Breast epithelium (tissue), 4 donors: ENCODE measurements at regions of chr18 and their contacts with region 1.

Region 1: DNA sequence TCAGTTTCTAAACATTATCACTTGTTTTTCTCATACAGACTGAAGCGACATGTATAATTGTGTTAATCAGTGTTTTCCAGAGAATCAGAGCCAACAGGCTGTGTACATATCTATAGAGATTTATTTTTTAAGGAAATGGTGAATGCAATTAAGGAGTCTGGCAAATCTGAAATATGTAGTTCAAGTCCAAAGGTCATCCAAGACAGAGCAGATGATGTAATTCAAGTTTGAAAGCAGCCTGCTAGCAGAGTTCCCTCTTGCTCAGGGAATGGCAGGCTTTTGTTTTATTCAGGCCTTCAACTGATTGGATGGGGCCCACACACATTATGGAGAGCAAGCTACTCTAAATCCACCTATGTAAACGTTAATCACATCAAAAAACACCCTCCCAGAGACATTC is 282.6 kb downstream of the CBLN2 start:
- DNase-seq: no peak
- H3K4me3 ChIP-seq: no peak overlapping the region
- H3K27ac ChIP-seq: no peak overlapping the region
- H3K4me1 ChIP-seq: no peaks in the 10 kb centered on the region
- H3K27me3 ChIP-seq: no peaks in the 10 kb centered on the region
- CTCF ChIP-seq: no peak
- POLR2A ChIP-seq: no peak

Region 2: DNA sequence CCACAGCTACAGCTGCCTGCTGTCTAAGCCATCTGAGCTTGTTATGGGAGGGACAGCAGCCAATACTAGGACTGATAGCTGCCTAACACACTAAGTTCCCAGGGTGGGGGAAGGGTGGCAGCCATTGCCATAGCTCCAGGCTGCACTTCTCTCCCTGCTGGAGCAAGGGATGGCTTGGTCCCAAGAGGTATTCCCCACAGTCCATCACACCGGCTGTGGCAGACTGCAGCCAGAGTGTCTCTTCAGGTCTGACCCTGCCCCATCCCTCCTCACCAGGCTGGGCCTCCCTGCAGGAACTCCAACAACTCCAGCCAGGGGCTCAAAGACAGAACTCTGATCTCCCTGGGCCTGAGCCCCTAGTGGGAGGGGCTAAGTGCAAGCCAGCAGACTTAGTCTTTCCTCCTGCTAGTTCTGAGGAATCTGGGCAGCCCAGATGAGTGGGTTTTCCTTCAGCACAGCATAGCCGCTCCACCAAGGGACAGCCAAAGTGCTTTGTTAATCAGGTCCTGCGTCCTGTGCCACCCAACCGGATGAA is 1340.7 kb before region 1 on chr18:
- intact Hi-C with region 1: no loop called
- DNase-seq: no peak
- H3K4me3 ChIP-seq: no peak overlapping the region
- H3K27ac ChIP-seq: no peak overlapping the region
- H3K4me1 ChIP-seq: no peaks in the 10 kb centered on the region
- H3K27me3 ChIP-seq: no peaks in the 10 kb centered on the region
- CTCF ChIP-seq: no peak
- POLR2A ChIP-seq: no peak

Region 3: DNA sequence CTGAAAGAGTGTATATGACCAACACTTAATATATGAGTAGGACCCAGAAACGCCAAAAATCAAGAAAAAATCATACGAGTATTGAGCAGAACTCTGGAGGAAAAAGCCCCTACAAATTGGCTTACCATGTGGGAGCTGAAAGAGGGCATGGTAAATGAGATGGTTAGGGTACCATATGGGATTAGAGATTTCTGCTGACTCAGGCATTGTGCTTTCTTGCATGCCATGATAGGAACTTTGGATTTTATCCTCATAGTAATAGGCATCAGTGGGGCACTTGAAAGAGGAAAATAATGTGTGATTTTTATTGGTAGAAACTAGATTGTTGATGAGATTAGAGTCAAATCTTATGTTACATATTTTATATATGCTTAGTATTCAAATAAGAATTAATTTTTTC is 11.4 kb after region 1 on chr18:
- intact Hi-C with region 1: loop called (anchors 1 kb)
- DNase-seq: no peak
- H3K4me3 ChIP-seq: no peak overlapping the region
- H3K27ac ChIP-seq: no peak overlapping the region
- H3K4me1 ChIP-seq: no peaks in the 10 kb centered on the region
- H3K27me3 ChIP-seq: no peaks in the 10 kb centered on the region
- CTCF ChIP-seq: no peak
- POLR2A ChIP-seq: no peak

Region 4: GRCh38 chr18:72985686-72986085 is 724.1 kb after region 1 on chr18:
- intact Hi-C with region 1: no loop called
- DNase-seq: no peak
- H3K4me3 ChIP-seq: no peak overlapping the region
- H3K27ac ChIP-seq: no peak overlapping the region
- H3K4me1 ChIP-seq: no peaks in the 10 kb centered on the region
- H3K27me3 ChIP-seq: no peaks in the 10 kb centered on the region
- CTCF ChIP-seq: no peak
- POLR2A ChIP-seq: no peak